CD8-positive, alpha-beta memory T cell (primary cell): ENCODE measurements at regions of chr18 and their contacts with region 1.

Region 1: DNA sequence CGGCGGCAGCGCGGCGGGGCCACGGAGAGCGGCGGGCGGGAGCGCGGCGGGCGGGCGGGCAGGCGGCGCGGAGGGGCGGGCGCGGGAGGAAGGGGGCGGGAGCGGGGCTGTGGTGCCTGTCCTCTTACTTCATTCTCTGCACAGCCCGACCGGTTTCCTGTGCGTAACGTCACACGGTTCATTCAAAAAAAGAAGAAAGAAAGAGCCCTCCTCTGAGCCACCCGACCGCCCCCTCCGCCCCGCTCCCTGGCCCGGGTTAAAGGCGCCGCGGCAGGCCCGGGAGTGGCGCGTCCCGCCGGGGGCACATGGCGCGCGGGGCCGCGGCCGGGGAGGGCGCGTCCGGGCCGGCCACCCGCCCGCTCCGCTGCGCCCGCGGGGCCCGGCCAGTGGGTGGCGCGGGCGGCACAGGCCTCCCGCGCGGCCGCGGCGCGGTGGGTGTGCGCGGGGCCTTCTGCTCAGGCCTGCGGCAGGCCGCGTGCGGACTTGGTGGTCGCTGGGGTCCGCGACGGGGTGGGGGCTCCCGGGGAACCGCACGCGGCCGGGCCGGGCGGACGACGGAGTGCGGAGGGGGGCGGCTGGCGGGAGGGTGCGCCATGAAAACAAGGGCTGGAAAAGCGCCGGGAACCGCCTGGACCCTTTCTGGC is 599 bp upstream of the BCL2 start:
- DNase-seq: peak; percentile 81 to 93 (median 89)
- H3K4me3 ChIP-seq: peak overlapping the region; percentile 34
- H3K4me3 Mint-ChIP-seq: peak overlapping the region; percentile 87 to 99 (median 92)
- H3K27ac ChIP-seq: no peak overlapping the region
- H3K27ac Mint-ChIP-seq: peak overlapping the region; percentile 65 to 95 (median 90)
- H3K4me1 ChIP-seq: peaks cover 13% of the 10 kb centered on the region
- H3K4me1 Mint-ChIP-seq: peaks cover 30 to 56% (median 54%) of the 10 kb centered on the region in 3 donors
- H3K27me3 ChIP-seq: no peaks in the 10 kb centered on the region
- H3K27me3 Mint-ChIP-seq: no peaks in the 10 kb centered on the region

Region 2: DNA sequence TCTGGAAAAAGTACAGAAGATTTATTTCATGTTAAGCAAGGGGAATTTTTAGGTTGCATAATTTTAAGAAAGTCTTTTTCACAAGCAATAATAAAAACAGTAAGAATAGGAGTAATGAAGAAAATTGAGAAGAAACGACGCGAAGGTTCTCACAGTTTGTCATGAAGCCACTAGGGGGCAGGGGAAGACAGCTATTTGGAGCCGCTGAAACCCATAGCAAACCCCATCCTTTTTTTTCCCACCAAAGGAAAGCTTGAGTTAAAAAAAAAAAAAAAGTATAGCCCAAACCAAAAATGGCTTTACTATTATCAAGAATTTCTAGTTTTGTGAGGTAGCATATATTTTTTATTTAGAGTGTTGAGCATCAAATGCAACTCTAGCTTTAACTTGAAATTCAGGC is 303.9 kb before region 1 on chr18:
- CTCF ChIA-PET with region 1: interaction called, 52 read pairs
- POLR2A ChIA-PET with region 1: interaction called, 5 read pairs
- DNase-seq: peak in 4 of 5 donors; percentile 31 to 63 (median 50)
- H3K4me3 ChIP-seq: no peak overlapping the region
- H3K4me3 Mint-ChIP-seq: no peak overlapping the region
- H3K27ac ChIP-seq: no peak overlapping the region
- H3K27ac Mint-ChIP-seq: peak overlapping the region in 1 of 8 donors; percentile 39
- H3K4me1 ChIP-seq: no peaks in the 10 kb centered on the region
- H3K4me1 Mint-ChIP-seq: no peaks in the 10 kb centered on the region
- H3K27me3 ChIP-seq: peaks cover 4% of the 10 kb centered on the region
- H3K27me3 Mint-ChIP-seq: peaks cover 12 to 26% of the 10 kb centered on the region in 2 donors

Region 3: DNA sequence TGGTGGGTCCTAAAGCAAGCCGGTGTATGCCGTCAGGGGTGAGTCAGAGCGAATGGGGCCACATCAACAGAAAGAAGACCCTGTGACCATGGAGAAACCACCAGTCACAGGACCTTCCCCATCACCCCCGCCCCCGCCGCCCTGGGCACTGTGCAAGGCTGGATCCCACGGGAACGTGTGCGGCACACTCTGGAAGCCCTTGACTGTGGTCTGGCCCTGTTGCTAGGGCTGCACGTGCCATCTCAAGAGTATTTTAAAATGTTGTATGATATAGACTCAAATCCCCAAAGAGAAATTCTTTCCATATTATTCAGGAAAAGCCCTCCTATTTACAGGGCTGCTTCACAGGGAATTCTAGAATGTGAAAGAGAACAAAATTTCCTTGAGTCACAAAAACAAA is 175.4 kb before region 1 on chr18:
- CTCF ChIA-PET with region 1: interaction called, 144 read pairs
- POLR2A ChIA-PET with region 1: no interaction called
- DNase-seq: no peak
- H3K4me3 ChIP-seq: no peak overlapping the region
- H3K4me3 Mint-ChIP-seq: no peak overlapping the region
- H3K27ac ChIP-seq: no peak overlapping the region
- H3K27ac Mint-ChIP-seq: no peak overlapping the region
- H3K4me1 ChIP-seq: peaks cover 2% of the 10 kb centered on the region
- H3K4me1 Mint-ChIP-seq: peaks cover 32 to 62% (median 60%) of the 10 kb centered on the region in 3 donors
- H3K27me3 ChIP-seq: no peaks in the 10 kb centered on the region
- H3K27me3 Mint-ChIP-seq: no peaks in the 10 kb centered on the region

Region 4: GRCh38 chr18:63199743-63200241 is 120.4 kb before region 1 on chr18:
- CTCF ChIA-PET with region 1: interaction called, 29 read pairs
- POLR2A ChIA-PET with region 1: interaction called, 14 read pairs
- DNase-seq: peak in 4 of 5 donors; percentile 10 to 71 (median 60)
- H3K4me3 ChIP-seq: peak overlapping the region; percentile 87
- H3K4me3 Mint-ChIP-seq: no peak overlapping the region
- H3K27ac ChIP-seq: peak overlapping the region; percentile 10
- H3K27ac Mint-ChIP-seq: no peak overlapping the region
- H3K4me1 ChIP-seq: peaks cover 74% of the 10 kb centered on the region
- H3K4me1 Mint-ChIP-seq: peaks cover 32 to 49% (median 34%) of the 10 kb centered on the region in 3 donors
- H3K27me3 ChIP-seq: no peaks in the 10 kb centered on the region
- H3K27me3 Mint-ChIP-seq: no peaks in the 10 kb centered on the region

Region 5: DNA sequence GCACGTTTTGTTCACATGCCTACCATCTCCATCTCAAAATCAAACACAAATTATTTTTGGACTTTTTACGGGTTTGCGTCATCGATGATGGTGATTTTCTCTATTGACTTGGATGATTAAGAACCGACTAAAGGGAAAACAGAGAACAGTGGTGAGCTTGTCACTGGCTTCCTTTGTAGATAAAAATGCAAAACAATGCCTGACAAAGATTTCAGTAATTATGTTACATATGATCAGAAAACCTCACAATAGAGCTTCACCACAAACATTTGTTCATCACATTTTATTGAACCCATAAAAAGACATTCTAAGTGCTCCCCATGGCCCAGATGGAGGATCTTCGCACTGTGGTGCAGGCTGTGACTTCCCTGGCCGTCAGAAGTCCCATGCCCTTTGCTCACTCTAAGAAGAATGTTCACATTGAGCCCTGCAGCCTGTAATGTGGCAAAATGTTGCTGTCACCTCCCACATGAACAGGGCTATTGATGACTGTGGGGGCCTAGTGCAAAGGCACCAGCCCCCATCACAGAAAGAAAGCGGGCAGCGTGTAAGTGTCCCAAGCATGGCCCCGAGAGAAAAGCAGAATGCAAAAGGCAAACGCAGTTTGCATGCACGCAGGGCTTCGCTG is 61.3 kb before region 1 on chr18:
- CTCF ChIA-PET with region 1: interaction called, 12 read pairs
- POLR2A ChIA-PET with region 1: no interaction called
- DNase-seq: no peak
- H3K4me3 ChIP-seq: no peak overlapping the region
- H3K4me3 Mint-ChIP-seq: peak overlapping the region in 5 of 7 donors; percentile 21 to 71 (median 54)
- H3K27ac ChIP-seq: no peak overlapping the region
- H3K27ac Mint-ChIP-seq: peak overlapping the region; percentile 37 to 85 (median 70)
- H3K4me1 ChIP-seq: peaks cover 18% of the 10 kb centered on the region
- H3K4me1 Mint-ChIP-seq: peaks cover 59 to 93% (median 79%) of the 10 kb centered on the region in 3 donors
- H3K27me3 ChIP-seq: no peaks in the 10 kb centered on the region
- H3K27me3 Mint-ChIP-seq: no peaks in the 10 kb centered on the region

Region 6: DNA sequence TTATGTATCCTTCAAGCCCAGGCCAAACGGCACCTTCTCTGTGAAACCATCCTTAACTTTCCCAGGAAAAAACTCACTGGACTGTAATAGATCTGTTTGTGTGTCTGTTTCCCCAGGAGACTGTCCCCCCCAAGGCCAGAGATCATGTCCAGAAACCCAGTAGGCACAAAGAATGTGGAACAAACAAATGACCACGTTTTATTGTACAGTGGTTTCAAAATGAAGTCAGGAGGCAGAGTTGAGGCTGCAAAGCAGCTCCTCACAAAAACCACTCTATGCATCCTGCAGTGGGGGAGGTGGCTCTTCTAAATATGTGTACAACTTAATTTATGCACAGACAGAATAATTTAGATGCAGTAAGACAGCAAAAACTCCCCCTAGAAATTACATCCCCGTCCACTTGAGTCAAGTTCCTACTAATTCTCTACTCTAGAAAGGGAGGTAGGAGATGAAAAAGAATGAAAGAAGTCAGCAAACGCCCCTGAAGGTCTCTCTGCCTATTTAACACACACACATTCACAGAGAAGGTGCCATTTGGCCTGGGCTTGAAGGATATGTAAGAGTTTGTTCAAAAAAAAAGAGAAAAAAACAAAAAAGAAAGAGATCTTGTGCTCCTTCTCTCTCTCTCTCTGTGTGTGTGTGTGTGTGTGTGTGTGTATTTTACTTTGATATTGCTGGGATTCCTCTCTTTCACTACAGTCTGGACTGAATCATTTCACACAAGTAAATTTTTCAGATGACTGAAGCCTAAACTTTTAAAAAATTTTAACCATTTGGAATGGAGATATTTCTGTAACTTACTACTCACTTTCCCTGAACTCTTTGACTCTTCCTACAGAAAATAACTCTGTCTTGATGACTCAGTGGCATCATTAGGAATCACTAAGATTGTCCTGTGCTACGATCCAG is 20.1 kb before region 1 on chr18:
- CTCF ChIA-PET with region 1: interaction called, 58 read pairs
- POLR2A ChIA-PET with region 1: interaction called, 15 read pairs
- DNase-seq: no peak
- H3K4me3 ChIP-seq: peak overlapping the region; percentile 4
- H3K4me3 Mint-ChIP-seq: peak overlapping the region; percentile 47 to 83 (median 74)
- H3K27ac ChIP-seq: no peak overlapping the region
- H3K27ac Mint-ChIP-seq: peak overlapping the region; percentile 89 to 98 (median 94)
- H3K4me1 ChIP-seq: peaks cover 71% of the 10 kb centered on the region
- H3K4me1 Mint-ChIP-seq: peaks cover 72 to 89% (median 83%) of the 10 kb centered on the region in 3 donors
- H3K27me3 ChIP-seq: no peaks in the 10 kb centered on the region
- H3K27me3 Mint-ChIP-seq: no peaks in the 10 kb centered on the region

Region 7: DNA sequence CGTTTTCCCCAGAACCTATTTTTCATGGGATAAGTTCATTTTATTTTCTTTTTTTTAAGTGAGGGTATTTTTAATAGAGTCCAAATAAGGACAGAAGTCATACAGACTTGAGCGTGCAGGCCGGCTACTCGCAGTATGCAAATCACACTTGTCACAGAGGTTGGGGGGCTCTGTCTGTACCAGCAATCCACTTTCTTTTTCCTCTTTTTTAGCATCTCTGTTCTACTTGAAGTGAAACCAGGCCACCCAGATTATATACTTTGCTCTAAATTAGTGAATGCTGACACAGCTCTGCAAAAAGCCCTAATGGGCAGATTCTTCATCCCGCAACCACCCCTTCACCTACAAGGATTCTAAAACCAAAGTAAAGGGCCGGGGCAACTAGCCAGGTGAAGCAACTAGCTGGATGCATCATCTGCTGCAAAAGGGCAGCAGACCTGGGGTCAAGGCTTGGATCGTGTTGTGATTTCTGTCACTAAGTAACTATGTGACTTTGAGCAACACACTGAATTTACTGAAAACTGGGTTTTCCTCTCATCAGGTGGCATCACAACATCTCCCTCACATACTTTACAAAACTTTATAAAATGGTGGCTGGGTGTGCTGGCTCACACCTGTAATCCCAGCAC is 28.5 kb after region 1 on chr18:
- CTCF ChIA-PET with region 1: no interaction called
- POLR2A ChIA-PET with region 1: no interaction called
- DNase-seq: no peak
- H3K4me3 ChIP-seq: no peak overlapping the region
- H3K4me3 Mint-ChIP-seq: no peak overlapping the region
- H3K27ac ChIP-seq: no peak overlapping the region
- H3K27ac Mint-ChIP-seq: peak overlapping the region in 1 of 8 donors; percentile 23
- H3K4me1 ChIP-seq: no peaks in the 10 kb centered on the region
- H3K4me1 Mint-ChIP-seq: peaks cover 1 to 3% (median 3%) of the 10 kb centered on the region in 3 donors
- H3K27me3 ChIP-seq: no peaks in the 10 kb centered on the region
- H3K27me3 Mint-ChIP-seq: no peaks in the 10 kb centered on the region

Region 8: GRCh38 chr18:63439334-63439733 is 119.2 kb after region 1 on chr18:
- CTCF ChIA-PET with region 1: interaction called, 40 read pairs
- POLR2A ChIA-PET with region 1: no interaction called
- DNase-seq: peak; percentile 2 to 56 (median 49)
- H3K4me3 ChIP-seq: no peak overlapping the region
- H3K4me3 Mint-ChIP-seq: no peak overlapping the region
- H3K27ac ChIP-seq: no peak overlapping the region
- H3K27ac Mint-ChIP-seq: no peak overlapping the region
- H3K4me1 ChIP-seq: no peaks in the 10 kb centered on the region
- H3K4me1 Mint-ChIP-seq: peaks cover 0 to 3% (median 0%) of the 10 kb centered on the region in 3 donors
- H3K27me3 ChIP-seq: no peaks in the 10 kb centered on the region
- H3K27me3 Mint-ChIP-seq: peaks cover 2 to 15% of the 10 kb centered on the region in 2 donors

Region 9: GRCh38 chr18:64882896-64883295 is 1562.7 kb after region 1 on chr18:
- CTCF ChIA-PET with region 1: no interaction called
- POLR2A ChIA-PET with region 1: no interaction called
- DNase-seq: no peak
- H3K4me3 ChIP-seq: no peak overlapping the region
- H3K4me3 Mint-ChIP-seq: no peak overlapping the region
- H3K27ac ChIP-seq: no peak overlapping the region
- H3K27ac Mint-ChIP-seq: no peak overlapping the region
- H3K4me1 ChIP-seq: no peaks in the 10 kb centered on the region
- H3K4me1 Mint-ChIP-seq: no peaks in the 10 kb centered on the region
- H3K27me3 ChIP-seq: no peaks in the 10 kb centered on the region
- H3K27me3 Mint-ChIP-seq: no peaks in the 10 kb centered on the region